Activated naive CD4-positive, alpha-beta T cell treated with anti-CD3 and anti-CD28 coated beads for 36 hours (primary cell): ENCODE measurements at regions of chr16 and their contacts with region 1.

Region 1: GRCh38 chr16:77308163-77308561 is 109.0 kb downstream of the SYCE1L start:
- DNase-seq: peak; percentile 10
- H3K4me3 Mint-ChIP-seq: no peak overlapping the region
- H3K27ac Mint-ChIP-seq: peak overlapping the region; percentile 83
- H3K4me1 Mint-ChIP-seq: peaks cover 19% of the 10 kb centered on the region
- H3K27me3 Mint-ChIP-seq: peaks cover 20% of the 10 kb centered on the region

Region 2: DNA sequence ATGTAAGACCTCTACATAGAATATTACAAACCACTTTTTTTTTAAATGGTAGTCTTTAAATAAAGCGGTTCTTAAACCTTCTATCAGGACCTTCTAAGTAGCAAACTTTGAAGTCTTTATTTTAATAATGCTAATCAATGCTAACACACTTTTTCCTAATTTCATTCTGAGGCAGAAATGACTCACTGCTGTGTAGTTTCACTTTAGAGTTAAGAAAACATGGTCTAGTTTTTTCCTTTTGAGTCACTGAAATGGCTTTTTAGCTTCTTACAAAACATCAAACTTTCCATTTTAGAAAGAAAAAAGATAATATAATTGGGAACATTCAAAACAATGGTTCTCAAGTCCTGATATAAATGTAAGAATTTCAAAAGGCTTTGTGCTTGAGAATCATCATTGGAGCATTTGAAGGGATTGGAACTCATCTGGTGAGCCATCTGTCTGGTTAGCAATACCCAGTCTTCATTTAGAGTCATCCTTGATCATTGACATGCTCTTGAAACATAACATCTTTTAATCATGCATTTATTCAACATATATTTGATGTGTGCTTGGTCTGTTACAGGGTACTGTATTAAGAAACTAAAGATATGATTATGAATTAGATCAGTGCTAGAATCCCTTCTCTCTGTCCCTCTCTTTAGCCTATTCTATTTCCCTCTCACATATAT is 375.5 kb before region 1 on chr16:
- CTCF ChIA-PET with region 1: no interaction called
- intact Hi-C with region 1: loop called (anchors 5 kb)
- DNase-seq: no peak
- H3K4me3 Mint-ChIP-seq: no peak overlapping the region
- H3K27ac Mint-ChIP-seq: no peak overlapping the region
- H3K4me1 Mint-ChIP-seq: peaks cover 4% of the 10 kb centered on the region
- H3K27me3 Mint-ChIP-seq: no peaks in the 10 kb centered on the region

Region 3: GRCh38 chr16:77288222-77288621 is 19.9 kb before region 1 on chr16:
- CTCF ChIA-PET with region 1: interaction called, 3 read pairs
- intact Hi-C with region 1: loop called (anchors 1 kb)
- DNase-seq: no peak
- H3K4me3 Mint-ChIP-seq: no peak overlapping the region
- H3K27ac Mint-ChIP-seq: no peak overlapping the region
- H3K4me1 Mint-ChIP-seq: peaks cover 8% of the 10 kb centered on the region
- H3K27me3 Mint-ChIP-seq: no peaks in the 10 kb centered on the region

Region 4: GRCh38 chr16:77330332-77331042 is 22.3 kb after region 1 on chr16:
- CTCF ChIA-PET with region 1: no interaction called
- intact Hi-C with region 1: loop called (anchors 1 kb)
- DNase-seq: peak; percentile 58
- H3K4me3 Mint-ChIP-seq: no peak overlapping the region
- H3K27ac Mint-ChIP-seq: peak overlapping the region; percentile 71
- H3K4me1 Mint-ChIP-seq: peaks cover 17% of the 10 kb centered on the region
- H3K27me3 Mint-ChIP-seq: peaks cover 18% of the 10 kb centered on the region

Region 5: GRCh38 chr16:78099372-78100161 is 791.4 kb after region 1 on chr16 and contains the start of gene WWOX:
- CTCF ChIA-PET with region 1: no interaction called
- intact Hi-C with region 1: loop called (anchors 5 kb)
- DNase-seq: peak; percentile 95
- H3K4me3 Mint-ChIP-seq: peak within 1 kb of the TSS; percentile 84
- H3K27ac Mint-ChIP-seq: peak within 1 kb of the TSS; percentile 88
- H3K4me1 Mint-ChIP-seq: peaks cover 24% of the 10 kb centered on the region
- H3K27me3 Mint-ChIP-seq: peaks cover 3% of the 10 kb centered on the region
- total RNA-seq, gene WWOX: 20.2 to 21.4 TPM